Calu3 (cell line): ENCODE measurements at regions of chrX and their contacts with region 1.

Region 1: GRCh38 chrX:30821116-30821515 is 67.9 kb downstream of the TAB3 start:
- DNase-seq: no peak
- H3K4me3 Mint-ChIP-seq: no peak overlapping the region
- H3K27ac Mint-ChIP-seq: no peak overlapping the region
- H3K4me1 Mint-ChIP-seq: no peaks in the 10 kb centered on the region
- H3K27me3 Mint-ChIP-seq: no peaks in the 10 kb centered on the region
- CTCF ChIP-seq: no peak

Region 2: DNA sequence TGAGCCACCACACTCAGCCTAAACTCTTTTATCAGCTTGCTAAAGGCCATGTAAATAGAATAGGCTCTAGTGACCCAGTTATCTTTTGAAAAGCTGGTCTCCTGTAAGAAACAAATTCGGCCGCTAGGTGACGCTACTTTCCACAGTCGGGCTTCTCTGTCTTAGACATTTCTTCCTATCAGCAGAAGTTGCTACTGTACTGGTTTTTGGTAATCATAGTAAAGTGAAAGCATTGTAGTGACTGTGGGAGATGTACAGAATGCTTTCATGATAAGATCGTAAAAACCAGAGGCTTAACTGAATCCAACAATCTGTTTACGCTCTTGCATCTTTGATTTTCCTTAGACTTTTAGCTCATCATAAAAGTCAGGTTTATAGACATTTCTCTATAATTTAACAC is 85.3 kb before region 1 on chrX:
- CTCF ChIA-PET with region 1: no interaction called
- intact Hi-C with region 1: loop called (anchors 2 kb)
- DNase-seq: peak; percentile 68
- H3K4me3 Mint-ChIP-seq: no peak overlapping the region
- H3K27ac Mint-ChIP-seq: no peak overlapping the region
- H3K4me1 Mint-ChIP-seq: no peaks in the 10 kb centered on the region
- H3K27me3 Mint-ChIP-seq: no peaks in the 10 kb centered on the region
- CTCF ChIP-seq: peak; percentile 31